Lower leg skin (tissue), 4 donors: ENCODE measurements at regions of chr5 and their contacts with region 1.

Region 1: GRCh38 chr5:91352831-91353695 is 30.1 kb downstream of the ARRDC3 start:
- DNase-seq: no peak
- H3K4me3 ChIP-seq: no peak overlapping the region
- CTCF ChIP-seq: no peak
- POLR2A ChIP-seq: no peak

Region 2: DNA sequence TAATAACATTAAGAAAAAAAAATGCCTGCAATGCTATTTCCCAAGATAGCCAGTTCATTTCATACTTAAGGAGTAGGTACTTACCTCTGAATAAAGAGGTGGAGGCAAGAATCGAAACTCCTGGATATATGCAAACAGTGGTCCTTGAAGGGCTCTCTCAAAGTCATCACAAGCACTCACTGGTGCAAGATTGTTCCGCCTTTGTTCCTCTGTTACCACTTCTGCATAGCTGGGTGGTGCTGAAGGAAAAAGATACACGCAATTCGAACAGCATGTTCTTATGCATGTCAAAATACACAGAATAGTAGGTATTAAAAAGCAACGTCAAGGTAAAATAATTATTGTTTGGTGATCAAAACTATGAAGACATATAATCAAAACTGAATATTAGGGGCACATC is 20.5 kb after region 1 on chr5:
- intact Hi-C with region 1: loop called (anchors 1 kb)
- DNase-seq: no peak
- H3K4me3 ChIP-seq: no peak overlapping the region
- CTCF ChIP-seq: no peak
- POLR2A ChIP-seq: no peak

Region 3: DNA sequence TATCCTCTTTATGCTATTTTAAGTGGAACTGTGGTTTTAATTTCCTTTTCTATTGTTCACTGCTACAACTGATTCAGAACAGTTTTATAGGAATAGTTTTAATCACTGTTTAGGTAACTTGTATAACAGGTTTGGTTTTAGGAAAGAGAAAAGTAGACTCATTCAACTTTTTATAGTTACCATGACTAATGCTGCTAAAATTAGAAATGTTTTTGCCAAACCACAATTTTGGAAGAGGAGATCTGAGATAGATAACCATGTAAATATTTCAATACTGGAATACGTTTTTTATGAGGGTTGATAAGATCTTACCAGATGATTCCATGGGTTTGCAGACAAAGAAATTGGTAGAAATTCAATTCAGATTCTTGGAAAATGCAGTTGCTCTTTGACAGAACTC is 434.7 kb after region 1 on chr5:
- intact Hi-C with region 1: no loop called
- DNase-seq: no peak
- H3K4me3 ChIP-seq: no peak overlapping the region
- CTCF ChIP-seq: no peak
- POLR2A ChIP-seq: no peak